Dorsolateral prefrontal cortex (tissue), 120 donors: ENCODE measurements at regions of chr7 and their contacts with region 1.

Region 1: GRCh38 chr7:116145245-116145852 is 65.0 kb upstream of the TES start:
- DNase-seq: no peak
- H3K4me3 ChIP-seq: no peak overlapping the region
- H3K27ac ChIP-seq: no peak overlapping the region
- H3K27me3 ChIP-seq: peaks cover 0 to 7% (median 0%) of the 10 kb centered on the region in 45 donors
- CTCF ChIP-seq: no peak

Region 2: GRCh38 chr7:116075351-116076145 is 69.8 kb before region 1 on chr7:
- intact Hi-C with region 1: no loop called
- DNase-seq: no peak
- H3K4me3 ChIP-seq: no peak overlapping the region
- H3K27ac ChIP-seq: no peak overlapping the region
- H3K27me3 ChIP-seq: no peaks in the 10 kb centered on the region
- CTCF ChIP-seq: no peak

Region 3: GRCh38 chr7:116525913-116526861 is 380.8 kb after region 1 on chr7:
- intact Hi-C with region 1: no loop called
- DNase-seq: peak in 8 of 10 donors; percentile 32 to 75 (median 41)
- H3K4me3 ChIP-seq: peak overlapping the region; percentile 48 to 80 (median 67)
- H3K27ac ChIP-seq: peak overlapping the region in 41 of 59 donors; percentile 16 to 86 (median 66)
- H3K27me3 ChIP-seq: peaks cover 0 to 43% (median 10%) of the 10 kb centered on the region in 45 donors
- CTCF ChIP-seq: peak; percentile 28 to 90 (median 64)

Region 4: GRCh38 chr7:116588641-116589594 is 443.6 kb after region 1 on chr7:
- intact Hi-C with region 1: loop called in 1 of 2 experiments (anchors 10 kb)
- DNase-seq: no peak
- H3K4me3 ChIP-seq: no peak overlapping the region
- H3K27ac ChIP-seq: peak overlapping the region in 1 of 59 donors; percentile 12
- H3K27me3 ChIP-seq: no peaks in the 10 kb centered on the region
- CTCF ChIP-seq: peak; percentile 73 to 98 (median 85)